Right cardiac atrium (tissue), 5 donors: ENCODE measurements at regions of chr6 and their contacts with region 1.

Region 1: GRCh38 chr6:34196126-34196830 is 40.4 kb upstream of the HMGA1 start:
- DNase-seq: peak; percentile 86 to 97 (median 96)
- ATAC-seq: peak; percentile 98 to 99
- H3K4me3 ChIP-seq: peak overlapping the region; percentile 55
- H3K27ac ChIP-seq: no peak overlapping the region
- H3K4me1 ChIP-seq: no peaks in the 10 kb centered on the region
- H3K27me3 ChIP-seq: no peaks in the 10 kb centered on the region

Region 2: GRCh38 chr6:34236131-34236996 is 40.1 kb after region 1 on chr6 and contains the start of gene HMGA1:
- intact Hi-C with region 1: loop called in 2 of 4 experiments (anchors 5 kb)
- DNase-seq: peak; percentile 89 to 95 (median 94)
- ATAC-seq: peak; percentile 92
- H3K4me3 ChIP-seq: peak within 1 kb of the TSS; percentile 94
- H3K27ac ChIP-seq: peak within 1 kb of the TSS; percentile 74
- H3K4me1 ChIP-seq: peaks cover 2% of the 10 kb centered on the region
- H3K27me3 ChIP-seq: no peaks in the 10 kb centered on the region
- total RNA-seq, gene HMGA1: 34.5 to 43.0 (median 39.0) TPM

Region 3: DNA sequence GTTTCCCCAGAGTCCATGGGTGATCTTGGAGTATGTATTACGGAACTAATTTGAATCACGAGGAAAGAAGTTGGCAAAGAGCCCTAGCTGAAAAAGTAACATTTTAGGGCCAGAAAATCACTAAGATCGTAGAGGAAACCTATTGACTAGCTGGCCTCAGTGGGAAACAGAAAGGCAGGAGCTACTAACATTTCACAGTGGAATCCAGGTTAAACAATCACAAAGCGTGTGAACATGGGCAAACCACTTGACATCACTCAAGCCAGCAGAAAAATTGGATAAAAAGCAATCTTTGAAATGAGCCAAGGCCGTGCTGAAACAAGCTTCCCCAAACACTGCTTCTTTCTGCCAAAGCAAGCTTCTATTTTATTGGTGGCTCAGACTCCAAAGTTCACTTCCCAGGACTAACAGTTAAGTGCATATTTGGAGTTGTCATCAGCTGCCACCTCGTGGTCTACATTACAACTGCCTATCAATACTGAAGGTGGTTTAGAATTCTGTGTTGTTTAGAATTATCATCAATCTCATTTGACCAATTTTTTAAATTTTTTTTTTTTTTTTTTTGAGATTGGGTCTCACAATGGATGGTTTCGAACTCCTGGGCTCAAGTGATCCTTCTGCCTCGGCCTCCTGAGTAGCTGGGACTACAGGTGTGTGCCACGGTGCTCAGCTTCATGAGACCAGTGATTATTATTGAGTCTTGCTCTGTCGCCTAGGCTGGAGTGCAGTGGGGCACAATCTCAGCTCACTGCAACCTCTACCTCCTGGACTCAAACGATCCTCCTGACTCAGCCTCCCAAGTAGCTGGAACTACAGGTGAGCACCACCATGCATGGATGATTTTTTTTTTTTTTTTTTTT is 219.0 kb after region 1 on chr6:
- intact Hi-C with region 1: loop called in 3 of 4 experiments (anchors 2 to 5 kb)
- DNase-seq: peak in 2 of 3 donors; percentile 44 to 76
- ATAC-seq: peak; percentile 91 to 94
- H3K4me3 ChIP-seq: no peak overlapping the region
- H3K27ac ChIP-seq: no peak overlapping the region
- H3K4me1 ChIP-seq: no peaks in the 10 kb centered on the region
- H3K27me3 ChIP-seq: no peaks in the 10 kb centered on the region